Activated CD4-positive, alpha-beta memory T cell treated with anti-CD3 and anti-CD28 coated beads for 36 hours (primary cell): ENCODE measurements at regions of chr12 and their contacts with region 1.

Region 1: DNA sequence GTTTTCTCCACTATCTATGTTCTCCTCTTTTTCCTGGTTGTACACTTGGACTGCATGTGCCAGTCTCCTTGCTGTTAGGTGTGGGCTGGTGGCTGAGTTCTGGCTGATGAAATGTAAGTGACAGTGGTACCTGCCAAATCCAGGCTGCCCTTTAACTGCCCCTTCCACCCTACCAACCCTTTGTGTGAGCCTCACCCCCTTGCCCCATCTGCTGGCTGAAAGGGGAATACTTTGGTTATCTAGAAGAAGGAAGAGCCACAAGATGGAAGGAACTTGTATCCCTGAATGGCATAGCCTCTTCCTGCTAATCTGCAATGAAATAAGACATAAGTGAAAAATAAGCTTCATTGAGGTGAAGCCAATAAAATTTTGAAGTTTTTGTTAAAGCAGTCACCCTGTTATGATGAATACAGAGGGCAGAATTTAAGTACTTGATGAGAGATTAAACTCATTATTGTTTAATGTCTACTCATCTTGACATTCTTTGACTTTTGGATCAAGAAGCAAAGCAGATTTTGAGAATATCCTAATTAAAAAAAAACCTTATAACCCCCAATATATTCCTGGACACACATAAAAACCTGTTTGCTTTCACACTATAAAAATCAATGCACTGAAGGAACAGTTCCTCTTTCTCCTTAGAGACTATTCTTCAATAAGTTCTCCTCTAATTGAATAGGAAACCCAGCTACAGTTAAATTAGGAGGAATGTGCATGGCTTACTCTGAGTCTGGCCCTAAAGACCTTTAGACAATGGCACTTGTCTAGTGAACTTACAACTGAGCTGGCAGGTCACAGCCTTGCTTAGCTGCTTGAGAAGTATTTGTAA is 262.6 kb upstream of the BTG1 start:
- DNase-seq: peak; percentile 77
- H3K4me3 Mint-ChIP-seq: no peak overlapping the region
- H3K27ac Mint-ChIP-seq: peak overlapping the region; percentile 33
- H3K4me1 Mint-ChIP-seq: peaks cover 48% of the 10 kb centered on the region
- H3K27me3 Mint-ChIP-seq: no peaks in the 10 kb centered on the region

Region 2: GRCh38 chr12:91991399-91992187 is 416.7 kb before region 1 on chr12:
- CTCF ChIA-PET with region 1: no interaction called
- POLR2A ChIA-PET with region 1: no interaction called
- intact Hi-C with region 1: loop called (anchors 1 kb)
- DNase-seq: no peak
- H3K4me3 Mint-ChIP-seq: no peak overlapping the region
- H3K27ac Mint-ChIP-seq: no peak overlapping the region
- H3K4me1 Mint-ChIP-seq: peaks cover 27% of the 10 kb centered on the region
- H3K27me3 Mint-ChIP-seq: no peaks in the 10 kb centered on the region

Region 3: GRCh38 chr12:92085040-92085735 is 323.1 kb before region 1 on chr12:
- CTCF ChIA-PET with region 1: no interaction called
- POLR2A ChIA-PET with region 1: no interaction called
- intact Hi-C with region 1: no loop called
- DNase-seq: peak; percentile 55
- H3K4me3 Mint-ChIP-seq: no peak overlapping the region
- H3K27ac Mint-ChIP-seq: no peak overlapping the region
- H3K4me1 Mint-ChIP-seq: peaks cover 38% of the 10 kb centered on the region
- H3K27me3 Mint-ChIP-seq: no peaks in the 10 kb centered on the region

Region 4: DNA sequence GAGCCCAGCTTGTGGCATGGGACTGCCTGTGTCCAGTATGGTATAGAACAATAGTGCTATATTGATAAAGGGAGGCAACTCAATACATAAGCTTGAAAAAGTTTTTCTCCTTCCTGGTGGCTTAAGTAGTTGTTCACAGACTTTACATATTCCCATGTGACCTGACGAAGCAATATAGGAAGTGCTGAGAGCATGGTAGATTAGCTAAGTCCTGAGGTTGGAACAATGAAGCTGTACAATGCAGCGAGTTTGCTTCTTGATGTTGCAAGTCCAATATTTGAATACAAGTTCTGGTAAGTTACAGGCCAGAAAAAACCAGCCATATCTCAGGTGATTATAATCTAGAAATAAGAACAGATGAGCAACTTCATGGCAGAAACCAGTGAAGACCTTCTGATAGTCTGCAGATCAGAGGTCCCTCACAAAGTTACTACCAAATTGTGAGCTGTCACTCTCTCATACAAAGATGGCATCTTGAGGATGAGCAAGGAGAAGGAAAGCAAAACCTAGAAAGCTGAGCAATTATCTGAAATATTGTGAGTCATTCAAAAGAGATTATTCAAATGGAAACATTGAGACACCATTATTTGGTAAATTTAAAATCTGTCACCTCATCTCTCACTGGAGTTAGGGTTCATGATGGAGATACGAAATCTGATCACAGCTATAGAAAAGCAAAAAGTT is 189.8 kb before region 1 on chr12:
- CTCF ChIA-PET with region 1: interaction called, 6 read pairs
- POLR2A ChIA-PET with region 1: interaction called, 5 read pairs
- intact Hi-C with region 1: loop called (anchors 1 kb)
- DNase-seq: no peak
- H3K4me3 Mint-ChIP-seq: no peak overlapping the region
- H3K27ac Mint-ChIP-seq: peak overlapping the region; percentile 74
- H3K4me1 Mint-ChIP-seq: peaks cover 23% of the 10 kb centered on the region
- H3K27me3 Mint-ChIP-seq: no peaks in the 10 kb centered on the region

Region 5: DNA sequence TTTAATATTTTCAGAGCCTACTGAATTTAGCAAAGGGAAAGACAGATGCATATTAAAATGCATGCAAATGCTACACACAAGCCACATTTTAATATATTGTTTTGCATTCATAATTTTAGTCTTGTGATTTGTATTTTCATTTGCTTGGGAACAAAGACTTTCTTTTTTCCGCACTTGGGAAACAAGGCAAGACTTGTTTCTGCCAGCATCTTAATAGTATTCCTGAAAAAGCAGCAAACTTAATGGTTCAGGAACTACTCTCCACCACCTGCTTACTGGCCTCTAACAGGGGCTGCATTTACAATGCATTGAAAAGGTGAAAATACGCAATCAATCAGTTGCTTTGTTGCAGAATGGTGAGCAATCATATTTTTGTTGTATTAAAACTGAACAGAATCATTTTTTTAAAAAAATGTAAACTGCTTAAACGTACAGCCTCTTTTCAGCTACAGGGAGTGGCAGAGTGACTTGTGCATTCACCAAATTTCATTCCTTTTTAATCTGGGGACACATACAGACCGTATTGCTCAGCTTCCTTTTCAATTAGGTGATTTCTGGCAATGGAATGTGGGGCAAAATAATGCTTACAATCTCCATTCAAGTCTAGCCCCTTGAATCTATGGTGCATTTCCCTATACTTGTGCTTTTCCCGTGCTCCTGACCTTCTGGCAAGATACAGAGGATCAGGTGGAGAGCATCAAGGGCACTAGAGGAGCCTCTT is 118.5 kb before region 1 on chr12:
- CTCF ChIA-PET with region 1: no interaction called
- POLR2A ChIA-PET with region 1: no interaction called
- intact Hi-C with region 1: no loop called
- DNase-seq: no peak
- H3K4me3 Mint-ChIP-seq: no peak overlapping the region
- H3K27ac Mint-ChIP-seq: no peak overlapping the region
- H3K4me1 Mint-ChIP-seq: no peaks in the 10 kb centered on the region
- H3K27me3 Mint-ChIP-seq: no peaks in the 10 kb centered on the region

Region 6: DNA sequence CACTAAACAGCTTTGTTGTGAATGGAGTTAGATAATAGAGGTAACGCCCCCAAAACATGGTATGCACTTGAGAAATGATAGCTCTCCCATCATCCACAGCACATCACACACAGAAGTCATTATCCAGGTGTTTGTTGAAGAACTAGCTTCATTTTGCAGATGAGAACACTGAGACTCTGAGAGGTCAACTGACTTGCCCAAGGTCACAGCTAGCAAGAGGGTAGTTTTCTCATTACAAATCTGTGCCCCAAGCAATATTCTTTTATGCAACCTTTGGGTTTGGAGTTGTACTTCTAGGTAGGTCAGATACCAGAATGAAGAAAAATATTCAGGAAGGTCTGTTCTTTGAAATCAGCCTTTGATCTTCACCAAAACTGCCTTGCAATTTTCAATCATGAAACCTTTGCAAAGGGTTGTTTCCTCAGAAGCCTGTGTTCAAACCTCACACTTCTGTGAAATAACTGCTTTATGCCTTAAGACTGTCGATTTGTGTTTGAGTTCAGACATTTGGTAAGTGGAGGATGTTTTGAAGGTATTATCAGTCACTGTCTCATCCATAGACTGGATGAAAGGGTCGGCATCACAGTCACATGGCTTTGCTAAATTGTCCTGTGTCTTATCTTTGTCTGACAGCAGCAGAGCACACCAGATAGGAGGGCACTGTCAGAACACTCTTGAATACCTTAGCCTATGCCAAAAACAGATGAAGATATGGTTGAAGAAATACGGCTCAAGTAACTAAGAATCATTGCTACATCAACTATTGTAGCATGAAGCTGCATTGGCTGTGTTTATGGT is 29.4 kb before region 1 on chr12:
- CTCF ChIA-PET with region 1: interaction called, 3 read pairs
- POLR2A ChIA-PET with region 1: no interaction called
- intact Hi-C with region 1: loop called (anchors 2 kb)
- DNase-seq: no peak
- H3K4me3 Mint-ChIP-seq: no peak overlapping the region
- H3K27ac Mint-ChIP-seq: peak overlapping the region; percentile 76
- H3K4me1 Mint-ChIP-seq: peaks cover 36% of the 10 kb centered on the region
- H3K27me3 Mint-ChIP-seq: no peaks in the 10 kb centered on the region

Region 7: GRCh38 chr12:92551853-92552397 is 143.6 kb after region 1 on chr12:
- CTCF ChIA-PET with region 1: interaction called, 3 read pairs
- POLR2A ChIA-PET with region 1: interaction called, 3 read pairs
- intact Hi-C with region 1: loop called (anchors 1 kb)
- DNase-seq: peak; percentile 75
- H3K4me3 Mint-ChIP-seq: no peak overlapping the region
- H3K27ac Mint-ChIP-seq: no peak overlapping the region
- H3K4me1 Mint-ChIP-seq: peaks cover 25% of the 10 kb centered on the region
- H3K27me3 Mint-ChIP-seq: no peaks in the 10 kb centered on the region

Region 8: GRCh38 chr12:92769124-92769901 is 361.0 kb after region 1 on chr12:
- CTCF ChIA-PET with region 1: no interaction called
- POLR2A ChIA-PET with region 1: no interaction called
- intact Hi-C with region 1: no loop called
- DNase-seq: no peak
- H3K4me3 Mint-ChIP-seq: no peak overlapping the region
- H3K27ac Mint-ChIP-seq: no peak overlapping the region
- H3K4me1 Mint-ChIP-seq: peaks cover 12% of the 10 kb centered on the region
- H3K27me3 Mint-ChIP-seq: no peaks in the 10 kb centered on the region